Heart right ventricle (tissue), 16 donors: ENCODE measurements at regions of chr13 and their contacts with region 1.

Region 1: GRCh38 chr13:113816946-113817859 is 46.7 kb downstream of the GAS6 start:
- DNase-seq: peak; percentile 87 to 88
- ATAC-seq: peak; percentile 16 to 71 (median 44)
- H3K4me3 ChIP-seq: peak overlapping the region in 2 of 10 donors; percentile 26 to 31
- H3K27ac ChIP-seq: peak overlapping the region in 9 of 10 donors; percentile 28 to 82 (median 74)
- H3K4me1 ChIP-seq: peaks cover 49 to 81% (median 60%) of the 10 kb centered on the region in 9 donors
- H3K27me3 ChIP-seq: no peaks in the 10 kb centered on the region
- CTCF ChIP-seq: peak; percentile 74 to 89 (median 85)

Region 2: GRCh38 chr13:113758651-113759524 is 58.3 kb before region 1 on chr13 and contains the start of gene TMEM255B:
- intact Hi-C with region 1: loop called in 1 of 10 experiments (anchors 2 kb)
- DNase-seq: peak; percentile 89 to 90
- ATAC-seq: peak; percentile 95 to 97 (median 97)
- H3K4me3 ChIP-seq: peak within 1 kb of the TSS; percentile 52 to 83 (median 68)
- H3K27ac ChIP-seq: peak within 1 kb of the TSS; percentile 37 to 93 (median 74)
- H3K4me1 ChIP-seq: peaks cover 0 to 27% (median 12%) of the 10 kb centered on the region in 9 donors
- H3K27me3 ChIP-seq: peaks cover 0 to 26% (median 0%) of the 10 kb centered on the region in 7 donors
- CTCF ChIP-seq: peak; percentile 14 to 75 (median 45)
- total RNA-seq, gene TMEM255B: 2.4 to 11.1 (median 5.5) TPM

Region 3: GRCh38 chr13:113863436-113864272 is 46.5 kb after region 1 on chr13 and contains the start of gene GAS6:
- intact Hi-C with region 1: loop called in 7 of 10 experiments (anchors 1 to 5 kb)
- DNase-seq: peak; percentile 69 to 83
- ATAC-seq: peak; percentile 30 to 79 (median 56)
- H3K4me3 ChIP-seq: peak within 1 kb of the TSS; percentile 70 to 95 (median 86)
- H3K27ac ChIP-seq: peak within 1 kb of the TSS; percentile 92 to 99 (median 97)
- H3K4me1 ChIP-seq: peaks cover 16 to 57% (median 46%) of the 10 kb centered on the region in 9 donors
- H3K27me3 ChIP-seq: peaks cover 0 to 34% (median 0%) of the 10 kb centered on the region in 7 donors
- CTCF ChIP-seq: no peak
- total RNA-seq, gene GAS6: 146 to 223 (median 174) TPM

Region 4: GRCh38 chr13:113904411-113904810 is 87.2 kb after region 1 on chr13:
- intact Hi-C with region 1: loop called (anchors 2 to 5 kb)
- DNase-seq: peak; percentile 62 to 68
- ATAC-seq: peak; percentile 82 to 96 (median 92)
- H3K4me3 ChIP-seq: no peak overlapping the region
- H3K27ac ChIP-seq: no peak overlapping the region
- H3K4me1 ChIP-seq: peaks cover 0 to 16% (median 0%) of the 10 kb centered on the region in 9 donors
- H3K27me3 ChIP-seq: peaks cover 0 to 19% (median 0%) of the 10 kb centered on the region in 7 donors
- CTCF ChIP-seq: peak; percentile 61 to 85 (median 74)

Region 5: GRCh38 chr13:114226699-114227323 is 409.6 kb after region 1 on chr13:
- intact Hi-C with region 1: loop called in 5 of 10 experiments (anchors 2 to 5 kb)
- DNase-seq: peak; percentile 79 to 86
- ATAC-seq: peak; percentile 77 to 92 (median 90)
- H3K4me3 ChIP-seq: no peak overlapping the region
- H3K27ac ChIP-seq: no peak overlapping the region
- H3K4me1 ChIP-seq: peaks cover 0 to 41% (median 0%) of the 10 kb centered on the region in 9 donors
- H3K27me3 ChIP-seq: peaks cover 0 to 43% (median 28%) of the 10 kb centered on the region in 7 donors
- CTCF ChIP-seq: peak; percentile 82 to 94 (median 90)